ENCODE measurements at regions of chr14 and their contacts with region 1.

Region 1: GRCh38 chr14:35404449-35405303 is at the start of gene NFKBIA:
- DNase-seq: no peak
- H3K4me3 ChIP-seq: peak within 1 kb of the TSS; percentile 94
- H3K27ac ChIP-seq: peak within 1 kb of the TSS; percentile 92
- H3K27me3 ChIP-seq: no peaks in the 10 kb centered on the region
- CTCF ChIP-seq: peak; percentile 43
- polyA plus RNA-seq, gene NFKBIA: 51.6 and 80.2 TPM in 2 replicates

Region 2: DNA sequence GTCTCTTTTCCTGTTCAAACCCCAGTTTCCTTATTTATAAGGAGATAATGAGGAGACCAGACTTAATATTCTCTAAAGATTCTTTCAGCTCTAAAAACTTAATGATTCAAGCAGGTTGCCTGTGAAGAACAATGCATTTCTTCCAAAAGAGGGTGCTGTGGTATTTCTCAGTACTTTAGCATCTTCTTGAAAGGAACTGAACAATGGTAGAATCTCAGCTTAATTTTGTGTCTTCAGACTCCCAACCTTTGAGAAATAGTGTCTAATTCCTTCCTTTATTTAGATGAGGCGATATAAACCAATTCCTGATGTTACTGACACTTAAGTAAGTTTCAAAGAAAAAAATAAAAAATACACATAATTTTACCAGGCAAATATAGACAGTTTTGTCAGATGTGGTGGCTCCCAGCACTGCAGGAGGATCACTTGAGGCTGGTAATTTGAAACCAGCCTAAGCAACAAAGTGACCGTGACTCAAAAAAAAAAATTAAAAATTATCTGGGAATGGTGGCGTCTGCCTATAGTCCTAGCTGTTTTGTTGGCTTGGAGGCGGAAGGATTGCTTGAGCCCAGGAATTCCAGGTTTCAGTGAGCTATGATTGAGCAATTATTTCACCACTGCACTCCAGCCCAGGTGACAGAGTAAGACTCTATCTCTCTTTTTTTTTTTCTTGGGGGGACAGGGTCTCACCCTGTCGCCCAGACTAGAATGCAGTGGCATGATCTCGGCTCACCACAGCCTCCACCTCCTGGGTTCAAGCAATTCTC is 189.4 kb before region 1 on chr14:
- CTCF ChIA-PET with region 1: interaction called, 40 read pairs
- POLR2A ChIA-PET with region 1: interaction called, 11 read pairs
- DNase-seq: peak; percentile 34
- H3K4me3 ChIP-seq: no peak overlapping the region
- H3K27ac ChIP-seq: no peak overlapping the region
- H3K27me3 ChIP-seq: no peaks in the 10 kb centered on the region
- CTCF ChIP-seq: peak; percentile 72

Region 3: GRCh38 chr14:35306114-35306513 is 98.6 kb before region 1 on chr14:
- CTCF ChIA-PET with region 1: interaction called, 11 read pairs
- POLR2A ChIA-PET with region 1: interaction called, 4 read pairs
- DNase-seq: no peak
- H3K4me3 ChIP-seq: no peak overlapping the region
- H3K27ac ChIP-seq: no peak overlapping the region
- H3K27me3 ChIP-seq: no peaks in the 10 kb centered on the region
- CTCF ChIP-seq: no peak

Region 4: DNA sequence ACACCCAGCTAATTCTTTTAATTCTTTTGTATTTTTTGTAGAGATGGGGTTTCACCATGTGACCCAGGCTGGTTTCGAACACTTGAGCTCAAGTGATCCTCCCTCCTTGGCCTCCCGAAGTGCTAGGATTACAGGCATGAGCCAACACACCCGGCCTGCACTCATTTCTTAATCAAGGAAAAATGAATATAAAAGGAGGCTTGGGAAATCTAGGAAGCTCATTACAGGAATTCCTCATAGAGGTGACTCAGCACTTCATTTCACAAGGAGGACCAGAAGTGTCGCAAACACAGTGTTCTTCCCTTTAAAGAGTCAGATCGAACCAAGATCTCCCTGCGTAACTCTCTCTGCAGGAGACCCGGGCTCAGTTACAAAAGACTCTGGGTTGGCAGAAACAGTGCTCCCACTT is 30.4 kb before region 1 on chr14:
- CTCF ChIA-PET with region 1: interaction called, 4 read pairs
- POLR2A ChIA-PET with region 1: interaction called, 13 read pairs
- DNase-seq: peak; percentile 88
- H3K4me3 ChIP-seq: no peak overlapping the region
- H3K27ac ChIP-seq: peak overlapping the region; percentile 71
- H3K27me3 ChIP-seq: no peaks in the 10 kb centered on the region
- CTCF ChIP-seq: no peak

Measured in AG04450 (cell line).